IMR-90 (cell line): ENCODE measurements at regions of chr12 and their contacts with region 1.

Region 1: GRCh38 chr12:106084014-106084671 is 54.6 kb downstream of the NUAK1 start:
- DNase-seq: peak; percentile 88
- ATAC-seq: peak; percentile 76
- H3K4me3 ChIP-seq: no peak overlapping the region
- H3K27ac ChIP-seq: peak overlapping the region; percentile 66
- H3K4me1 ChIP-seq: peaks cover 42% of the 10 kb centered on the region
- H3K27me3 ChIP-seq: no peaks in the 10 kb centered on the region
- CTCF ChIP-seq: no peak
- POLR2A ChIP-seq: peak; percentile 18; the same call in 1 of the 2 replicates
- RAD21 ChIP-seq: no peak

Region 2: GRCh38 chr12:105253882-105254513 is 830.1 kb before region 1 on chr12:
- CTCF ChIA-PET with region 1: no interaction called
- POLR2A ChIA-PET with region 1: no interaction called
- dilution Hi-C with region 1: no loop called
- in situ Hi-C with region 1: no loop called
- intact Hi-C with region 1: loop called (anchors 10 kb)
- DNase-seq: peak; percentile 73
- ATAC-seq: peak; percentile 54
- H3K4me3 ChIP-seq: no peak overlapping the region
- H3K27ac ChIP-seq: peak overlapping the region; percentile 89
- H3K4me1 ChIP-seq: peaks cover 39% of the 10 kb centered on the region
- H3K27me3 ChIP-seq: no peaks in the 10 kb centered on the region
- CTCF ChIP-seq: no peak
- POLR2A ChIP-seq: 0 out of 2 replicates have a peak, but pooled peaks have one; percentile 30
- RAD21 ChIP-seq: 0 out of 2 replicates have a peak, but pooled peaks have one; percentile 12

Region 3: DNA sequence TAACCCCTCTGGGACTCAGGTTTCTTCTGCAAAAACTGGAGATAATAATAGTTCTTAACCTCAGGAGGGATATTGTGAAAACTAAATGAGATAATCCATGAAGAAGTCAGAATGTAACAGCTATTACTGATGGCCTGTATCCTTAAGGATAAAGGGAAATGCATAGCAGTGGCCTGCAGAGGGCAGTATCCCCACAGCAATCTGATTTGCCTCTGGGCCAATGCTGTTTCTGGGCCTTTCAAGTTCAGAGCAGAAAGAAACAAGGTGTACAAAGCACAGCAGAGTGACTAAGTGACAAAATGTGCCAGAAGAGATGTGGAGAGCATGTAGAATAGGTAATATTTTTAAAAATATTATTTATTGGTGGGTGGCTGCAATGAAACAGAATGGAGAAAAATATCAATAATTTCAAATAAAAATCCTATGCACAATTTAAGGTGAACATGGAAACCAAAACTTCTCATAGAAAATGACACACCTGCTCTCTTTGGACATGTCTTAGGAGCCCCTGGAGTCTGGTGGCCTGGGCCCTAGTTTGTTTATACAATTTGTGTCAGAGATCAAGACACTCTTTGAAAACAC is 663.4 kb before region 1 on chr12:
- CTCF ChIA-PET with region 1: no interaction called
- POLR2A ChIA-PET with region 1: no interaction called
- dilution Hi-C with region 1: no loop called
- in situ Hi-C with region 1: no loop called
- intact Hi-C with region 1: loop called (anchors 5 kb)
- DNase-seq: peak; percentile 77
- ATAC-seq: peak; percentile 64
- H3K4me3 ChIP-seq: no peak overlapping the region
- H3K27ac ChIP-seq: no peak overlapping the region
- H3K4me1 ChIP-seq: peaks cover 13% of the 10 kb centered on the region
- H3K27me3 ChIP-seq: no peaks in the 10 kb centered on the region
- CTCF ChIP-seq: peak; percentile 97
- POLR2A ChIP-seq: peak; percentile 69
- RAD21 ChIP-seq: peak; percentile 100

Region 4: GRCh38 chr12:105986779-105987684 is 97.1 kb before region 1 on chr12:
- CTCF ChIA-PET with region 1: no interaction called
- POLR2A ChIA-PET with region 1: no interaction called
- dilution Hi-C with region 1: no loop called
- in situ Hi-C with region 1: no loop called
- intact Hi-C with region 1: loop called (anchors 5 kb)
- DNase-seq: peak; percentile 95
- ATAC-seq: peak; percentile 75
- H3K4me3 ChIP-seq: no peak overlapping the region
- H3K27ac ChIP-seq: peak overlapping the region; percentile 89
- H3K4me1 ChIP-seq: peaks cover 20% of the 10 kb centered on the region
- H3K27me3 ChIP-seq: no peaks in the 10 kb centered on the region
- CTCF ChIP-seq: no peak
- POLR2A ChIP-seq: no peak; the same call in 1 of the 2 replicates
- RAD21 ChIP-seq: 0 out of 2 replicates have a peak, but pooled peaks have one; percentile 3

Region 5: DNA sequence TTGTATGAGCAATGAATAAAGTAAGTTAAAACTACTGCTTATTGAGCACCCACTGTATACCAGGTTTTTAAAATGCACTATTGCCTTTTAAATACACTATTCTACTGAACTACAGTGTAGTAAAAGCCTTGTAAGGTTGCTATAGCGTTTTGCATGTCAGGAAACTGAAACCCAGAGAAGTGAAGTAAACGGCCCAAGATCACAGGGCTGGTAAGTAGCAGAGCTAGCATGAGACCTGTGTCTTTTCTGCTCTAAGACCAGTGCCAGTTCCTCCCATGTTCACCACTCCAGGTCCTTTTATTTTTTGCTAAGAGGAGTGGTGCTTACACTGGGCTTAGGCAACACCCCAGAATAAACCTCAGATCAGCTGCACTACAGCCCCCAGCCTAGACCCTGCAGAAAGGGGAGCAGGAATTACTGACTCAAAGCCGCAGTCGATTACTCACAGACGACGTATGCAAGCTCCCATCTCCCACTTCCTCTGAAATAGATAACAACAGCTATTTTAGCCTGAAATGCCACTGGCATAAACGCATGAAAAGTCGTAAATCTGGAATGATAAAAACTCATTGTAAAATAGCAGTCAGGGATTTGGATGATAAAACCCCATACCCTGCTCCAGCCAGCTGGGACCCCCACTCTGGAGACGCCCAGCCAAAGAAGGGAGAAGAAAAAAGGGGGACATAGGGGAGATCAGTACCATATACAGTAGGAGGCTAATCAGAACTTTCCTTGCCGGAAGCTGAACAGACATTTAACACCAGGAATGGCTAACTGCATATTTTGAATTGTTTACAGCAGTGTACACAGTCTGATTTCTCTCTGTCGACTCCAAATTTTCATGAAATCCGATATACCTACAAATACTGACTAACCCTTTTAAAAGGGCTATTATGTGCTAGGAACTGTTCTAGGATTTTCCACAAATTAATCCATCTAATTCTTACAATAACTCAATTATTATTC is 53.6 kb before region 1 on chr12:
- CTCF ChIA-PET with region 1: no interaction called
- POLR2A ChIA-PET with region 1: no interaction called
- dilution Hi-C with region 1: no loop called
- in situ Hi-C with region 1: no loop called
- intact Hi-C with region 1: loop called (anchors 5 kb)
- DNase-seq: peak; percentile 96
- ATAC-seq: peak; percentile 86
- H3K4me3 ChIP-seq: peak overlapping the region; percentile 13; the same call in 1 of the 2 replicates
- H3K27ac ChIP-seq: peak overlapping the region; percentile 95
- H3K4me1 ChIP-seq: peaks cover 18% of the 10 kb centered on the region
- H3K27me3 ChIP-seq: no peaks in the 10 kb centered on the region
- CTCF ChIP-seq: no peak
- POLR2A ChIP-seq: peak; percentile 46; the same call in 1 of the 2 replicates
- RAD21 ChIP-seq: peak; percentile 10; the same call in 1 of the 2 replicates

Region 6: DNA sequence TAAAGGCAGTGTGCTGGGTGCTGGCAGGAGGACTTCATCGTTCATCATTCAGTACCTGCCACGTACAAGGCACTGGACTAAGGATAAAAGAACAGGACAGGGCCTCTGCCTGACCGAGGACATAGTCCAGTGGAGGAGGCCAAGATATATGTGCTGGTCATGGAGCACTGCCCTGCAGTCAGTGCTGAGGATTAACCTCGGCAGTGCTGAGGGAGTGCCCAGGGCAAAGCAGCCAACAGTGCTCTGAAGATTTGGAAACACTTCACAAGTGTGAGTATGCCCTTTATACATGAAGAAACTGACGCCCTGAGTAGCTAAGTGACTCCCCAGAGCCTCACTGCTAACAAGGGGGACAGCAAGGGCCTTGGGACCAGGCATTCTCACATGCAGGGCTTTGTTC is 427.2 kb after region 1 on chr12:
- CTCF ChIA-PET with region 1: no interaction called
- POLR2A ChIA-PET with region 1: no interaction called
- dilution Hi-C with region 1: no loop called
- in situ Hi-C with region 1: no loop called
- intact Hi-C with region 1: no loop called
- DNase-seq: no peak
- ATAC-seq: no peak
- H3K4me3 ChIP-seq: no peak overlapping the region
- H3K27ac ChIP-seq: no peak overlapping the region
- H3K4me1 ChIP-seq: no peaks in the 10 kb centered on the region
- H3K27me3 ChIP-seq: no peaks in the 10 kb centered on the region
- CTCF ChIP-seq: no peak
- POLR2A ChIP-seq: no peak
- RAD21 ChIP-seq: no peak